ENCODE measurements at regions of chr19 and their contacts with region 1.

Region 1: GRCh38 chr19:19531951-19532805 is 3.5 kb downstream of the YJEFN3 start:
- DNase-seq: no peak
- ATAC-seq: peak; percentile 93
- H3K4me3 ChIP-seq: no peak overlapping the region
- H3K27ac ChIP-seq: no peak overlapping the region
- H3K4me1 ChIP-seq: no peaks in the 10 kb centered on the region
- H3K27me3 ChIP-seq: no peaks in the 10 kb centered on the region
- CTCF ChIP-seq: peak; percentile 95 to 96 (median 95)
- EP300 ChIP-seq: no peak
- POLR2A ChIP-seq: peak; percentile 47
- RAD21 ChIP-seq: peak; percentile 96

Region 2: GRCh38 chr19:19192078-19192882 is 339.9 kb before region 1 on chr19 and contains the starts of genes BORCS8 and RFXANK:
- CTCF ChIA-PET with region 1: no interaction called
- POLR2A ChIA-PET with region 1: no interaction called
- RAD21 ChIA-PET with region 1: no interaction called
- SMC1A ChIA-PET with region 1: no interaction called
- in situ Hi-C with region 1: no loop called
- intact Hi-C with region 1: no loop called
- DNase-seq: peak; percentile 97
- ATAC-seq: peak; percentile 94
- H3K4me3 ChIP-seq: peak within 1 kb of the TSS; percentile 85
- H3K27ac ChIP-seq: peak within 1 kb of the TSS; percentile 97
- H3K4me1 ChIP-seq: peaks cover 11% of the 10 kb centered on the region
- H3K27me3 ChIP-seq: no peaks in the 10 kb centered on the region
- CTCF ChIP-seq: no peak
- EP300 ChIP-seq: no peak
- POLR2A ChIP-seq: peak; percentile 86
- RAD21 ChIP-seq: no peak
- polyA plus RNA-seq, gene BORCS8: 3.7 to 6.0 TPM
- polyA plus RNA-seq, gene RFXANK: 70.8 TPM

Region 3: GRCh38 chr19:19554074-19555023 is 22.2 kb after region 1 on chr19:
- CTCF ChIA-PET with region 1: interaction called, 50 read pairs
- POLR2A ChIA-PET with region 1: interaction called, 4 read pairs
- RAD21 ChIA-PET with region 1: interaction called, 18 read pairs
- SMC1A ChIA-PET with region 1: interaction called, 6 read pairs
- in situ Hi-C with region 1: no loop called
- intact Hi-C with region 1: no loop called
- DNase-seq: no peak
- ATAC-seq: peak; percentile 80
- H3K4me3 ChIP-seq: no peak overlapping the region
- H3K27ac ChIP-seq: no peak overlapping the region
- H3K4me1 ChIP-seq: no peaks in the 10 kb centered on the region
- H3K27me3 ChIP-seq: no peaks in the 10 kb centered on the region
- CTCF ChIP-seq: peak; percentile 56 to 86 (median 75)
- EP300 ChIP-seq: no peak
- POLR2A ChIP-seq: no peak
- RAD21 ChIP-seq: peak; percentile 46

Region 4: GRCh38 chr19:19643158-19644053 is 111.2 kb after region 1 on chr19 and contains the start of gene GMIP:
- CTCF ChIA-PET with region 1: interaction called, 38 read pairs
- POLR2A ChIA-PET with region 1: no interaction called
- RAD21 ChIA-PET with region 1: interaction called, 22 read pairs
- SMC1A ChIA-PET with region 1: interaction called, 21 read pairs
- in situ Hi-C with region 1: loop called (anchors 5 kb)
- intact Hi-C with region 1: loop called (anchors 1 kb)
- DNase-seq: no peak
- ATAC-seq: peak; percentile 94
- H3K4me3 ChIP-seq: peak within 1 kb of the TSS; percentile 96
- H3K27ac ChIP-seq: peak within 1 kb of the TSS; percentile 99
- H3K4me1 ChIP-seq: peaks cover 4% of the 10 kb centered on the region
- H3K27me3 ChIP-seq: no peaks in the 10 kb centered on the region
- CTCF ChIP-seq: peak; percentile 78 to 90 (median 81)
- EP300 ChIP-seq: no peak
- POLR2A ChIP-seq: peak; percentile 78
- RAD21 ChIP-seq: peak; percentile 90
- polyA plus RNA-seq, gene GMIP: 1.5 to 2.8 TPM

Region 5: GRCh38 chr19:19776041-19777008 is 244.1 kb after region 1 on chr19:
- CTCF ChIA-PET with region 1: interaction called, 3 read pairs
- POLR2A ChIA-PET with region 1: no interaction called
- RAD21 ChIA-PET with region 1: interaction called, 3 read pairs
- SMC1A ChIA-PET with region 1: no interaction called
- in situ Hi-C with region 1: loop called (anchors 10 kb)
- intact Hi-C with region 1: no loop called
- DNase-seq: peak; percentile 96
- ATAC-seq: peak; percentile 99
- H3K4me3 ChIP-seq: peak overlapping the region; percentile 78
- H3K27ac ChIP-seq: peak overlapping the region; percentile 68
- H3K4me1 ChIP-seq: no peaks in the 10 kb centered on the region
- H3K27me3 ChIP-seq: no peaks in the 10 kb centered on the region
- CTCF ChIP-seq: peak in 1 of 3 experiments; percentile 8; a peak in 1 of 6 replicates
- EP300 ChIP-seq: no peak
- POLR2A ChIP-seq: peak; percentile 77
- RAD21 ChIP-seq: no peak

Region 6: GRCh38 chr19:20423381-20424197 is 891.4 kb after region 1 on chr19:
- CTCF ChIA-PET with region 1: no interaction called
- POLR2A ChIA-PET with region 1: no interaction called
- RAD21 ChIA-PET with region 1: no interaction called
- SMC1A ChIA-PET with region 1: no interaction called
- in situ Hi-C with region 1: loop called (anchors 25 kb)
- intact Hi-C with region 1: no loop called
- DNase-seq: no peak
- ATAC-seq: peak; percentile 28; the same call in 1 of the 3 replicates
- H3K4me3 ChIP-seq: peak overlapping the region; percentile 61
- H3K27ac ChIP-seq: peak overlapping the region; percentile 64
- H3K4me1 ChIP-seq: no peaks in the 10 kb centered on the region
- H3K27me3 ChIP-seq: no peaks in the 10 kb centered on the region
- CTCF ChIP-seq: no peak
- EP300 ChIP-seq: no peak
- POLR2A ChIP-seq: no peak
- RAD21 ChIP-seq: no peak

Region 7: GRCh38 chr19:20776083-20777076 is 1244.2 kb after region 1 on chr19 and contains the start of gene ZNF66:
- CTCF ChIA-PET with region 1: no interaction called
- POLR2A ChIA-PET with region 1: no interaction called
- RAD21 ChIA-PET with region 1: no interaction called
- SMC1A ChIA-PET with region 1: no interaction called
- in situ Hi-C with region 1: loop called (anchors 25 kb)
- intact Hi-C with region 1: no loop called
- DNase-seq: peak; percentile 89
- ATAC-seq: peak; percentile 98
- H3K4me3 ChIP-seq: peak within 1 kb of the TSS; percentile 88
- H3K27ac ChIP-seq: peak within 1 kb of the TSS; percentile 80
- H3K4me1 ChIP-seq: no peaks in the 10 kb centered on the region
- H3K27me3 ChIP-seq: no peaks in the 10 kb centered on the region
- CTCF ChIP-seq: no peak
- EP300 ChIP-seq: no peak
- POLR2A ChIP-seq: peak; percentile 87
- RAD21 ChIP-seq: no peak
- polyA plus RNA-seq, gene ZNF66: 0.62 to 1.4 TPM